ENCODE measurements at regions of chr3 and their contacts with region 1.

Region 1: GRCh38 chr3:69948246-69948862 is 51.2 kb upstream of the SAMMSON start:
- DNase-seq: no peak
- H3K4me3 ChIP-seq: no peak overlapping the region
- H3K27ac ChIP-seq: no peak overlapping the region
- H3K4me1 ChIP-seq: peaks cover 0 to 11% (median 0%) of the 10 kb centered on the region in 4 donors
- H3K27me3 ChIP-seq: no peaks in the 10 kb centered on the region
- CTCF ChIP-seq: peak; percentile 54 to 66 (median 63)
- EP300 ChIP-seq: no peak
- POLR2A ChIP-seq: no peak

Region 2: GRCh38 chr3:69143605-69144004 is 804.7 kb before region 1 on chr3:
- in situ Hi-C with region 1: loop called in 1 of 4 experiments (anchors 25 kb)
- intact Hi-C with region 1: no loop called
- DNase-seq: no peak
- H3K4me3 ChIP-seq: no peak overlapping the region
- H3K27ac ChIP-seq: no peak overlapping the region
- H3K4me1 ChIP-seq: peaks cover 0 to 5% (median 0%) of the 10 kb centered on the region in 4 donors
- H3K27me3 ChIP-seq: no peaks in the 10 kb centered on the region
- CTCF ChIP-seq: no peak
- EP300 ChIP-seq: no peak
- POLR2A ChIP-seq: no peak

Region 3: GRCh38 chr3:69671082-69671952 is 277.0 kb before region 1 on chr3:
- in situ Hi-C with region 1: loop called in 1 of 4 experiments (anchors 25 kb)
- intact Hi-C with region 1: no loop called
- DNase-seq: no peak
- H3K4me3 ChIP-seq: no peak overlapping the region
- H3K27ac ChIP-seq: no peak overlapping the region
- H3K4me1 ChIP-seq: no peaks in the 10 kb centered on the region
- H3K27me3 ChIP-seq: no peaks in the 10 kb centered on the region
- CTCF ChIP-seq: peak; percentile 61 to 74 (median 72)
- EP300 ChIP-seq: no peak
- POLR2A ChIP-seq: no peak

Region 4: DNA sequence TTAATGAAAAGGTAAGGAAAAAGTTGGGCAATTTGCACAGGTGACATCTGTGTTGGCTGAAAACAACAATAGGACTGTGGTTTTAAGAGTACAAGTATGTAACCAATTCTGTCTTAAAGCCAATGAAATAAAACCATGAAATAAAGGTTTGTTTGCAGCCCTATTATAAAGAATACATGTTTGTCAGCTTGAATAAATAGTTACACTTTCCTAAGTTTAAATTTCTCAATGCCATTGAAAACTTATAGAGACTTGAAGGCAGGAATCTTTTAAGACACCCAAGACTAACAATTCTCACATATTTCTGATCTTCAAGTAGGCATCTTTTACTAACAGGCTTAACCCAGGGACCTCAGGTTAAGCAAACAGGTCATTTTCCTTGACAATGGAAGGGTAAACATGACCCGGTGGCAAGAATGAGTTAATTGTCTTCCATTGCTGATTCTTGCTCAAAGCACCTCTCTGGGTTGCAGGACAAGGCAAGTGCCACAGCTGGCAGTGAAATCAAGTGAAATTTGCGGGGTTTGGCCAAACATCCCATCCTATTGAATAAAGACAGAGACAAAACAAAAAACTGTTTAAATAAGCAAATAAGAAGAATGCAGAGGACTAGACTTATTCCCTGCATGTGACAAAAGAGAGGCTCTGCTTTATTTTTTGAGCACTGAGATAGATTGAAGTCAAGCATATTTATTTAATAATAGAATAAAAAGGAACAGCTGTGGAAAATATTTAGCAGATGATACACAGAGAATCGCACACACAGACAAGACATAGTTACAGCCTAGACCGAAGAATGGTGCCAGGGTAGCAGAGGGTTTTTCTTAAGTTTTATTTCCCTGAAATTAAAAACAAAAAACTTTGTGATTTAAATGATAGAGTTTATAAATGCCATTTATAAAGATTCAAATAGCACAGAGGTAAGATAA is 265.2 kb before region 1 on chr3:
- in situ Hi-C with region 1: loop called in 1 of 4 experiments (anchors 25 kb)
- intact Hi-C with region 1: loop called (anchors 10 kb)
- DNase-seq: no peak
- H3K4me3 ChIP-seq: no peak overlapping the region
- H3K27ac ChIP-seq: no peak overlapping the region
- H3K4me1 ChIP-seq: peaks cover 0 to 6% (median 0%) of the 10 kb centered on the region in 4 donors
- H3K27me3 ChIP-seq: no peaks in the 10 kb centered on the region
- CTCF ChIP-seq: no peak
- EP300 ChIP-seq: no peak
- POLR2A ChIP-seq: no peak

Region 5: GRCh38 chr3:69691860-69692259 is 256.5 kb before region 1 on chr3:
- in situ Hi-C with region 1: loop called in 3 of 4 experiments (anchors 10 to 25 kb)
- intact Hi-C with region 1: loop called (anchors 10 kb)
- DNase-seq: no peak
- H3K4me3 ChIP-seq: no peak overlapping the region
- H3K27ac ChIP-seq: no peak overlapping the region
- H3K4me1 ChIP-seq: peaks cover 0 to 6% (median 0%) of the 10 kb centered on the region in 4 donors
- H3K27me3 ChIP-seq: no peaks in the 10 kb centered on the region
- CTCF ChIP-seq: no peak
- EP300 ChIP-seq: no peak
- POLR2A ChIP-seq: no peak

Region 6: GRCh38 chr3:69890084-69890483 is 58.3 kb before region 1 on chr3:
- in situ Hi-C with region 1: no loop called
- intact Hi-C with region 1: no loop called
- DNase-seq: no peak
- H3K4me3 ChIP-seq: no peak overlapping the region
- H3K27ac ChIP-seq: no peak overlapping the region
- H3K4me1 ChIP-seq: no peaks in the 10 kb centered on the region
- H3K27me3 ChIP-seq: no peaks in the 10 kb centered on the region
- CTCF ChIP-seq: no peak
- EP300 ChIP-seq: no peak
- POLR2A ChIP-seq: no peak

Region 7: DNA sequence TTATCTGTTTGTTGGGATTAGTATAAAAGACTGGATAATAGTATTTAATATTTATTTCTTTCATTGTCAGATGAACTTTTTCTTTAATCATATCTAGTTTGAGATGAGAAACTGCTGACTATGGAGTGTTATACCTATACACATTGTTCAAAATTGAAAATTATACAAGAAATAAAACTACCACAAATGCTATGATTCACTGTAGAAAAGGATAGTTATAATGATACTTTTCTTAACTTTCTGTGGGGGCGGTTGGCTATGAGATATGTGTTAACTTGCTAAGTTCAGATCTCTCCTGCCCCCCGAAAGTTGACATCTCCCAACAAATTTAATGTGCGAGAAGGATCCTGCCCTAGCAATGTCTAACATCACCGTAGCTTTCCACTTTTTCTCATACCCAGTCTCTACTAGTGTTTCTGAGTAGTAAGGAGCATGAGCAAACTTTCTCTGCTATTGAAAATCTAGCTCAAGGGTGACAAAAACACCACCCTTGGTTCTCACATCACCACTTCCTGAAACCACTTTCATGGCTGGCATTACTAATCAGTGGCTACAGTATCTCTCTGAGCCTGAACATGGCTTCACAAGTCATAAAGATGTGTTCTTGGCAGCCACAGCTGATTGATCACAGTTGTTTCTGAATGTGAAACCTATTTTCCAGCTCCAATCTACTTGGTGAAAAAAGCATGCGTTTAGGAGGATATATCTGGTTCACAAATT is 35.4 kb after region 1 on chr3:
- in situ Hi-C with region 1: no loop called
- intact Hi-C with region 1: no loop called
- DNase-seq: no peak
- H3K4me3 ChIP-seq: no peak overlapping the region
- H3K27ac ChIP-seq: no peak overlapping the region
- H3K4me1 ChIP-seq: no peaks in the 10 kb centered on the region
- H3K27me3 ChIP-seq: no peaks in the 10 kb centered on the region
- CTCF ChIP-seq: no peak
- EP300 ChIP-seq: no peak
- POLR2A ChIP-seq: no peak

Region 8: GRCh38 chr3:71011565-71012287 is 1063.4 kb after region 1 on chr3:
- in situ Hi-C with region 1: no loop called
- intact Hi-C with region 1: no loop called
- DNase-seq: no peak
- H3K4me3 ChIP-seq: no peak overlapping the region
- H3K27ac ChIP-seq: peak overlapping the region in 1 of 4 donors; percentile 31
- H3K4me1 ChIP-seq: peaks cover 26 to 71% (median 36%) of the 10 kb centered on the region in 4 donors
- H3K27me3 ChIP-seq: no peaks in the 10 kb centered on the region
- CTCF ChIP-seq: no peak
- EP300 ChIP-seq: no peak
- POLR2A ChIP-seq: no peak

Measured in transverse colon (tissue), 4 donors.